Activated CD4-positive, alpha-beta T cell treated with anti-CD3 and anti-CD28 coated beads, Interleukin-2, amount 10 ng/mL, durations not matched to agents 24 days and 14 days (primary cell): ENCODE measurements at regions of chr1 and their contacts with region 1.

Region 1: DNA sequence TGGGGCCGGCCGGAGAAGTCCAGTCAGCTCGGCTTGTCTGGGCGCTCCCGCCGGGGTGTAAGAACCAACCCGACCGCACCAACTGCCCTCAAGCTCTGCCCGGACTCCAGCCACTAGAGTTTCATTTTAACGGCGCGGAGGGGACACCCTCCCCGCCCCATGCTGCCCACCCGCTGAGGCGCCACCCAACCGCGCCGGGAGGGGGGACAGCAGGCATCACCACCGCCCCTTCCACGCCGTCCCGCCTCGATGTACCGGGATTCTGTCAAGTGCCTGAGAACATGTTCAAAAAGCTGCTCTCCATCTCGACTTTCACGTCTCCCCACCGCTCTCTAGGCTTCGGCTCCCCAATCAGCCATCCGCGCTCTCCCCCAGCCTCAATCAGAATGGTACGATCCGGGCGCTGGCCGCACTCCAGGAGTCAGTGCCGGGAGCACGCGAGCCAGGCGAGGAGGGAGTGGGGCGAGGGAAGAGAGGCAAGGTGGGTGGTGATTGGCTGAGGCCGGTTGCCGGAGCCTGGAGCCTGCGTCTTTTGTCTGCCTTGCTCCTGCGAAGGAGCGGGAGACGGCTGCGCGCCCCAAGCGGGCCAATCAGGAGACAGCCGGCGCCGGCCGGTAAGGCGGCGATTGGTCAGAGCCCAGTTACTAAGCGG is at the start of gene PIK3R3:
- DNase-seq: peak; percentile 97
- H3K4me3 Mint-ChIP-seq: peak within 1 kb of the TSS; percentile 98
- H3K27ac Mint-ChIP-seq: peak within 1 kb of the TSS; percentile 98
- H3K4me1 Mint-ChIP-seq: peaks cover 26% of the 10 kb centered on the region
- H3K27me3 Mint-ChIP-seq: peaks cover 69% of the 10 kb centered on the region
- total RNA-seq, gene PIK3R3: 2.4 and 3.2 TPM in 2 replicates

Region 2: DNA sequence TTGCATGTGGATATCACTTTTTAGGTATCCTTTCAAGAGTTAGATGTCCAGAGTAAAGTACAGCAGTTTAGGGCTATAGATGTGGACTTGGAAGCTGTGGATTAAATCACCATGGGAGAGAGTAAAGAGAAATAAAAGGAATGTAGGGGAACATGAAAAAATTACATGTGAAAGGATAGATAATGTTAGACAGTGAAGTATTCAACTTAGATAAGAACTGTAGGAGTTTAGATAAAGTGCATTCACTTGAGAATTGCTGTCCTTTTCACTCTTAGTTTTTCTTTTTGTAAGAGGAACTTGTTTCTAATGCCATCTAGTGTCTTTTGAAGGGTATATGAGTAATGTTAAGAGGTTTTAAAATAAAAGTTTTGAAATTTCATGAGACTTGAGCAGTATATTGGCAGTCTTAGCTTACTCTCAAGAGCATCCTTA is 289.2 kb before region 1 on chr1:
- intact Hi-C with region 1: no loop called
- DNase-seq: no peak
- H3K4me3 Mint-ChIP-seq: peak overlapping the region; percentile 22
- H3K27ac Mint-ChIP-seq: peak overlapping the region; percentile 68
- H3K4me1 Mint-ChIP-seq: peaks cover 12% of the 10 kb centered on the region
- H3K27me3 Mint-ChIP-seq: no peaks in the 10 kb centered on the region

Region 3: GRCh38 chr1:46062651-46063319 is 69.9 kb before region 1 on chr1:
- intact Hi-C with region 1: loop called (anchors 2 kb)
- DNase-seq: peak; percentile 89
- H3K4me3 Mint-ChIP-seq: peak overlapping the region; percentile 9
- H3K27ac Mint-ChIP-seq: peak overlapping the region; percentile 74
- H3K4me1 Mint-ChIP-seq: peaks cover 17% of the 10 kb centered on the region
- H3K27me3 Mint-ChIP-seq: no peaks in the 10 kb centered on the region